ENCODE measurements at regions of chr19 and their contacts with region 1.

Region 1: DNA sequence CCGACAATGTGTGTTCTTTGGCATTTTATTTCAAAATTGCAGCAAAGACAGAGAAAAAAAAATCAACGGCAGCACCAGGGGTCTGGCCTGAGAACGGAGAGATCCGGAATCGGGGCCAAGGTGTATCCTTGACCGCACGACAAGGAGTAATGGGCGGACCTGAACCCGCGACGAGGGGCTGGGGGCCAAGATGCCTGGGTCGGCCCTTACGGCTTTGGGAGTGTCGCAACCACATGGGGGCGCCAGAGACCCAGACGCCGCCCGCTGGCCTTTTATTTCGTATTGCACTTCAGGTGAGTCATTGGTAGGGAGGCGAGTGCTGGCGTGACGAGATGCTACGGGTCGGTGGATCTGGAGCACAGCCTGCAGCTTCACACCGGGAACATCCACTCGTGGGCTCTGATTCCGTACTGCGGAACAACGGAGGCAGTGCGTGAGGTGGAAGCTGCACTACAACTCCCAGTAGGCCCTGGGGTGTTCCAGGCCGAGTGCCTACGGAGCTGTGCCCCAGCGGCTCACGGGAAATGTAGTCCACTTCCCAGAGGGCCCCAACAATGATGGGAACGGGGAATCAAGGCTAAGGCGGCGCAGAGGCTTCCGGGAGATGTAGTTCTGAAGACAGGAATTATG is 15.7 kb downstream of the BCAT2 start:
- DNase-seq: peak; percentile 95
- H3K4me3 Mint-ChIP-seq: peak overlapping the region; percentile 73
- H3K27ac Mint-ChIP-seq: peak overlapping the region; percentile 84
- H3K4me1 Mint-ChIP-seq: peaks cover 6% of the 10 kb centered on the region
- H3K27me3 Mint-ChIP-seq: no peaks in the 10 kb centered on the region
- CTCF ChIP-seq: peak; percentile 94

Region 2: GRCh38 chr19:48480558-48481500 is 314.3 kb before region 1 on chr19:
- CTCF ChIA-PET with region 1: no interaction called
- POLR2A ChIA-PET with region 1: no interaction called
- intact Hi-C with region 1: no loop called
- DNase-seq: no peak
- H3K4me3 Mint-ChIP-seq: no peak overlapping the region
- H3K27ac Mint-ChIP-seq: no peak overlapping the region
- H3K4me1 Mint-ChIP-seq: peaks cover 17% of the 10 kb centered on the region
- H3K27me3 Mint-ChIP-seq: no peaks in the 10 kb centered on the region
- CTCF ChIP-seq: no peak

Region 3: DNA sequence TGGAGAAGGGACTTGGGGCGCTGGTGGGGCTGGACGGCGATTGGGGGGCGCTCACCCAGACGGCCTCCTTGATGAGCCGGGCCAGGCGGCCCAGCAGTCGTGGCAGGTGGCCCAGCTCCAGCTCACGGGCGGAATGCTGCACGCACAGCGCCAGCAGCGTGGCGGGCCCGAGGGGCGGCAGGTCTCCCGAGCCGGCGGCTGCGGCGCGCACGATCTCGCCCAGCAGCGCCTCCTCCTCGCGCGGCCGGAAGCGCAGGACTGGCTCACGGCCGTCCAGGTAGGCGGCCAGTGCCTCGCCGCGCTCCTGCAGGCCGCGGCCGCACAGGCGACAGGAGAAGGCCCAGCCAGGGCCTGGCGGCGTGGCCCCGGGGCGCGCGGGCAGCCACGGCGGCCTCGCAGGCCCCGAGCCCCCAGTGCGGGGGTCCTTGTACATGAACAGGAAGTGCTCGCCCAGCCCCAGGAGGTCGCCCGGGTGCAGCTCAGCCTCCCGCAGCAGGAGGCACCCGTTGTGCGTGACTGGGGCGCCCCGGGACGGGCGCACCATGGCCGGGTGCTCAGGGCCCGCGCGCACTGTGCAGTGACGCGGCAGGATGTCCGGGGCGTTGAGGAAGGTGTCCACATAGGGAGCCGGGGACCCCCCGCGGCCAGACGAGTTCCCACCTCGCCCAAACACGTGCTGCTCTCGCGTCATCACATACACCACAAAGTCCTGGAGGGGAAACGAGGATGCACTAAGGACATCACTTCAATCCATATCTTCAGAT is 66.1 kb before region 1 on chr19:
- CTCF ChIA-PET with region 1: no interaction called
- POLR2A ChIA-PET with region 1: no interaction called
- intact Hi-C with region 1: no loop called
- DNase-seq: no peak
- H3K4me3 Mint-ChIP-seq: no peak overlapping the region
- H3K27ac Mint-ChIP-seq: no peak overlapping the region
- H3K4me1 Mint-ChIP-seq: peaks cover 8% of the 10 kb centered on the region
- H3K27me3 Mint-ChIP-seq: peaks cover 19% of the 10 kb centered on the region
- CTCF ChIP-seq: no peak

Region 4: DNA sequence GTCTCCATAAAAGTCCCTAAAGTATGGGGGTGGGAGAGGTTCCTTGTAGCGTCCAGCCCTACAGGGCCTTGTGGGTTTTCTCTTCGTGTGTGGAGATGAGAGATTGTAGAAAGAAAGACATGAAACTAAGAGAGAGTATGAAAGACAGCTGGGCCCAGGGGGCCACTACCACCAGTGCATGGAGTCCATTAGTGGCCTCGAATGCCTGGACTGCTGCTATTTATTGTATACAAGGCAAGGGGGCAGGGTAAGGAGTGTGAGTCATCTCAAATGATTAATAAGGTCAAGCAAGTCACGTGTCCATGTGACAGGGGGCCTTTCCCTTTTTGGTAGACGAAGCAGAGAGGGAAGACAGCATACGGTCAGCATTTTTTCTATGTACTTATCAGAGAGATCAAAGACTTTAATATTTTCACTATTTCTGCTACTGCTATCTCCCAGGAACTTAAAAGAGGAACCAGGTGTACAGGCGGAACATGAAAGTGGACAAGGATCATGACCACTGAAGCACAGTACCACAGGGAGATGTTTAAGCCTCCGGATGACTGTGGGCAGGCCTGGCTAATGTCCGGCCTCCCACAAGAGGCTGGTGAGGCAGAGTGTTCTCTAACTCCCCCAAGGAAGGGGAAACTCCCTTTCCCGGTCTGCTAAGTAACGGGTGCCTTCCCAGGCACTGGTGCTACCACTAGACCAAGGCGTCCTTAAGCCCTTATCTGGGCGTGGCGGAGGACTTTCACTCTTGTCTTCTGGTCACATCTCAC is 14.4 kb before region 1 on chr19:
- CTCF ChIA-PET with region 1: interaction called, 20 read pairs
- POLR2A ChIA-PET with region 1: no interaction called
- intact Hi-C with region 1: no loop called
- DNase-seq: peak; percentile 46
- H3K4me3 Mint-ChIP-seq: no peak overlapping the region
- H3K27ac Mint-ChIP-seq: peak overlapping the region; percentile 11
- H3K4me1 Mint-ChIP-seq: peaks cover 8% of the 10 kb centered on the region
- H3K27me3 Mint-ChIP-seq: no peaks in the 10 kb centered on the region
- CTCF ChIP-seq: no peak

Region 5: DNA sequence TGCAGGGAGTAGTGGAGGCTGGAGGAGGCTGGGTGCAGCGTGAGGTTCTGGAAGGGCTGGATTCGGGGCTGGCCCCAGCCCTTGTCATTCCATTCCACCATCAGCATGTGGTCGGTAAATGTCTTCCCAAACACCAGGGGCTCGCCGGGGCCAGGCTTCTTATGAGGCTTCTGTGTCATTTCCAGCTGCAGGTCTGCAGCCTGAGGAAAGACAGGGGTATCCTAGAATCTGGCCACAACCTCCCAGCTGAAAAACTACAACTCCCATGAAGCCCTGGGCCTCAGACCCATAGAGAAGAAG is 11.3 kb after region 1 on chr19:
- CTCF ChIA-PET with region 1: interaction called, 11 read pairs
- POLR2A ChIA-PET with region 1: interaction called, 32 read pairs
- intact Hi-C with region 1: no loop called
- DNase-seq: no peak
- H3K4me3 Mint-ChIP-seq: no peak overlapping the region
- H3K27ac Mint-ChIP-seq: no peak overlapping the region
- H3K4me1 Mint-ChIP-seq: peaks cover 26% of the 10 kb centered on the region
- H3K27me3 Mint-ChIP-seq: no peaks in the 10 kb centered on the region
- CTCF ChIP-seq: no peak

Region 6: GRCh38 chr19:48812094-48812929 is 17.1 kb after region 1 on chr19:
- CTCF ChIA-PET with region 1: interaction called, 11 read pairs
- POLR2A ChIA-PET with region 1: interaction called, 32 read pairs
- intact Hi-C with region 1: no loop called
- DNase-seq: peak; percentile 76
- H3K4me3 Mint-ChIP-seq: peak overlapping the region; percentile 75
- H3K27ac Mint-ChIP-seq: peak overlapping the region; percentile 51
- H3K4me1 Mint-ChIP-seq: peaks cover 38% of the 10 kb centered on the region
- H3K27me3 Mint-ChIP-seq: no peaks in the 10 kb centered on the region
- CTCF ChIP-seq: no peak

Region 7: GRCh38 chr19:48826606-48827020 is 31.4 kb after region 1 on chr19:
- CTCF ChIA-PET with region 1: interaction called, 38 read pairs
- POLR2A ChIA-PET with region 1: interaction called, 6 read pairs
- intact Hi-C with region 1: no loop called
- DNase-seq: peak; percentile 58
- H3K4me3 Mint-ChIP-seq: no peak overlapping the region
- H3K27ac Mint-ChIP-seq: no peak overlapping the region
- H3K4me1 Mint-ChIP-seq: no peaks in the 10 kb centered on the region
- H3K27me3 Mint-ChIP-seq: no peaks in the 10 kb centered on the region
- CTCF ChIP-seq: peak; percentile 10

Region 8: DNA sequence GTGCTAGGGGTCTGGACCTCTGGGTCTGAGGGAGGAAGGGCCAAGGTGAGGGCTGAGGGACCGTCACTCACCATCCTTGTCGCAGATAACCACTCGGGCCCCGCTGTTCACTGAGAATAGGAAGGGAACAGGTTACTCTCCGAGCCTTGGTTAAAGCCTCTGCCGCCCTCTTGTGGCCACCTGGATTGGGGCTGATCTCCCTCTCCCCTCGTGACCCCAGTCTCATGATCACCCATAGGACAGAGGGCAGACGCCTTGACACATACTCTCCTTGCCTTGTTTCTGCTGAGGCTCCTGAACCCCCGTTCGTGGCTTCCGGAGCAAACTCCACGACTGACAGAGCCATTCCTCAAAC is 40.5 kb after region 1 on chr19:
- CTCF ChIA-PET with region 1: interaction called, 337 read pairs
- POLR2A ChIA-PET with region 1: interaction called, 6 read pairs
- intact Hi-C with region 1: loop called (anchors 1 kb)
- DNase-seq: peak; percentile 91
- H3K4me3 Mint-ChIP-seq: no peak overlapping the region
- H3K27ac Mint-ChIP-seq: no peak overlapping the region
- H3K4me1 Mint-ChIP-seq: peaks cover 5% of the 10 kb centered on the region
- H3K27me3 Mint-ChIP-seq: no peaks in the 10 kb centered on the region
- CTCF ChIP-seq: peak; percentile 76

Region 9: GRCh38 chr19:48970923-48971395 is 175.8 kb after region 1 on chr19:
- CTCF ChIA-PET with region 1: interaction called, 5 read pairs
- POLR2A ChIA-PET with region 1: no interaction called
- intact Hi-C with region 1: loop called (anchors 2 kb)
- DNase-seq: peak; percentile 75
- H3K4me3 Mint-ChIP-seq: no peak overlapping the region
- H3K27ac Mint-ChIP-seq: no peak overlapping the region
- H3K4me1 Mint-ChIP-seq: peaks cover 6% of the 10 kb centered on the region
- H3K27me3 Mint-ChIP-seq: no peaks in the 10 kb centered on the region
- CTCF ChIP-seq: peak; percentile 89